ENCODE measurements at regions of chr7 and their contacts with region 1.

Region 1: GRCh38 chr7:151028131-151028947 is at the start of gene ABCB8:
- DNase-seq: peak; percentile 99
- H3K4me3 Mint-ChIP-seq: peak within 1 kb of the TSS; percentile 82
- H3K27ac Mint-ChIP-seq: peak within 1 kb of the TSS; percentile 94
- H3K4me1 Mint-ChIP-seq: peaks cover 55% of the 10 kb centered on the region
- H3K27me3 Mint-ChIP-seq: no peaks in the 10 kb centered on the region
- CTCF ChIP-seq: peak; percentile 60
- total RNA-seq, gene ABCB8: 40.2 and 42.3 TPM in 2 replicates

Region 2: GRCh38 chr7:150595361-150595760 is 433.0 kb before region 1 on chr7:
- CTCF ChIA-PET with region 1: no interaction called
- intact Hi-C with region 1: no loop called
- DNase-seq: no peak
- H3K4me3 Mint-ChIP-seq: no peak overlapping the region
- H3K27ac Mint-ChIP-seq: no peak overlapping the region
- H3K4me1 Mint-ChIP-seq: no peaks in the 10 kb centered on the region
- H3K27me3 Mint-ChIP-seq: peaks cover 48% of the 10 kb centered on the region
- CTCF ChIP-seq: no peak

Region 3: GRCh38 chr7:150962553-150963399 is 65.6 kb before region 1 on chr7:
- CTCF ChIA-PET with region 1: interaction called, 3 read pairs
- intact Hi-C with region 1: loop called (anchors 10 kb)
- DNase-seq: peak; percentile 74
- H3K4me3 Mint-ChIP-seq: no peak overlapping the region
- H3K27ac Mint-ChIP-seq: no peak overlapping the region
- H3K4me1 Mint-ChIP-seq: no peaks in the 10 kb centered on the region
- H3K27me3 Mint-ChIP-seq: peaks cover 89% of the 10 kb centered on the region
- CTCF ChIP-seq: peak; percentile 85

Region 4: DNA sequence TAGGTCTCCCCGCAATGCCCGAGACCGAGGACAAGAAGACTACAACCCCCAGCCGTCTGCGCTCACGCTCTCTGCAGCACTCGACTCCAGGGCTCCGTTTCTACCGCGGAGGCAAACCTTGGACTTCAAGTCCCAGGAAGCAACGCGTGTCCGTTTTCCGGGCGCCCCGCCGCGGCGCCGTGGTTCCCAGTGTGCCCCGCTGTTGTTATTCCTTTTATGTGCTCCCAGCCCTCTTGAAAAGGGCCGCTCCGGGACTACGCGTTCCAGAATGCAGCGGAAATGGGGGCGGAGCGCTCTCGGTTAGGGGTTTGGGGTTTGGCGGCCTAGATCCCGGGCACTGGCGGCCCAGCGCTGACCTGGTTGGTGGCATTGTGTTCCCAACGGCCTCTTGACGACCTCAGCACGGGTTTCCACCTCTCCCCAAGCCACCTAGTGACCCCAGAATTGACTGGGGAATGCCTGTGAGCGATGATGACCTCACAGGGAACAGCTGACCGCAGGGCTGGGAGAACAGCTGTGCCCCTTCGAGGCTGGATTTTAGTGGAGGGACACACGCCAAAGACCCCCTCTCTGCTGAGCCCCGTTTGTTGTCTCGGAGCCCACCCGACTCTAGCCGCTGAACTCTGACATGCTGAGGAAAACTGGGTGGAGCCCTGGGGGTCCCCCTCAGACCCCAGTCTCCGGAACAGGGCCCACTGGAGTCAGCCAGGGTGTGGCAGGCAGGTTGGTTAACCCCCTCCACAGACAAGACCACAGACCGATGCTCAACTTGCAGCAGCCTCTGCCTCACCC is 29.8 kb after region 1 on chr7:
- CTCF ChIA-PET with region 1: interaction called, 13 read pairs
- intact Hi-C with region 1: loop called (anchors 1 kb)
- DNase-seq: peak; percentile 96
- H3K4me3 Mint-ChIP-seq: peak overlapping the region; percentile 94
- H3K27ac Mint-ChIP-seq: peak overlapping the region; percentile 67
- H3K4me1 Mint-ChIP-seq: peaks cover 33% of the 10 kb centered on the region
- H3K27me3 Mint-ChIP-seq: no peaks in the 10 kb centered on the region
- CTCF ChIP-seq: no peak

Region 5: DNA sequence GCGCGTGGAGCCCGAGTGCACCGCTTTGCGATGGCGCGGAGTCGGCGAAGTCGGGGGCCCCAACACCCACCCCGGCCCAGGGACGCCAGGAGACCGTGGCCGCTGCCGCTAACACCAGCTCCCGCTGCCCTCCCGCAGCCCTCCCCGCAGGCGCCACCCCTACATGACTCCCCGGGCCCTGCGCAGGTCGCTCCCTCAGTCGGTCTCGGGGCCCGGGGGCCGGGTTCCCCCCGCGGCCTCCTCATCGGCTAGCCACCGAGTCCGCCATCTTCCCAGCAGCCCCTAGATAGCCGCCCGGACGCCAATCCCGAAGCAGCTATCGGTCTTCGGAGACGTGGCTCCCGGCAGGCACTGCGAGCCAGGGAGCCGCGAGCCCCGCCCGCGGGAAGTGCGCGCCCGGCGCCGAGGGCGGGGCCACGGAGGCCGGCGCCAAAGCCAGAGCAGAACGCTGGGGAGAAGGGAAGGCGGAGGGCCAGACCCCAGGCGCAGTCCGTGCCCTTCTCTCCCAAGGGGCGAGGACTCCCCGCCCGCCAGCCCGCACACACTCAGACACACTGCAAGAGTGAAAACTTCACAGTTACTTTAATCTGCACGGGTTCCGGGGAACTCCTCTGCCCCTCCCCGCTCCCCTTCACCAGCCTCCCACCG is 52.3 kb after region 1 on chr7 and contains the start of gene FASTK:
- CTCF ChIA-PET with region 1: interaction called, 5 read pairs
- intact Hi-C with region 1: loop called (anchors 5 kb)
- DNase-seq: peak; percentile 91
- H3K4me3 Mint-ChIP-seq: peak within 1 kb of the TSS; percentile 98
- H3K27ac Mint-ChIP-seq: peak within 1 kb of the TSS; percentile 61
- H3K4me1 Mint-ChIP-seq: peaks cover 21% of the 10 kb centered on the region
- H3K27me3 Mint-ChIP-seq: no peaks in the 10 kb centered on the region
- CTCF ChIP-seq: no peak
- total RNA-seq, gene FASTK: 113 and 121 TPM in 2 replicates